CD4-positive, alpha-beta memory T cell (primary cell): ENCODE measurements at regions of chr11 and their contacts with region 1.

Region 1: DNA sequence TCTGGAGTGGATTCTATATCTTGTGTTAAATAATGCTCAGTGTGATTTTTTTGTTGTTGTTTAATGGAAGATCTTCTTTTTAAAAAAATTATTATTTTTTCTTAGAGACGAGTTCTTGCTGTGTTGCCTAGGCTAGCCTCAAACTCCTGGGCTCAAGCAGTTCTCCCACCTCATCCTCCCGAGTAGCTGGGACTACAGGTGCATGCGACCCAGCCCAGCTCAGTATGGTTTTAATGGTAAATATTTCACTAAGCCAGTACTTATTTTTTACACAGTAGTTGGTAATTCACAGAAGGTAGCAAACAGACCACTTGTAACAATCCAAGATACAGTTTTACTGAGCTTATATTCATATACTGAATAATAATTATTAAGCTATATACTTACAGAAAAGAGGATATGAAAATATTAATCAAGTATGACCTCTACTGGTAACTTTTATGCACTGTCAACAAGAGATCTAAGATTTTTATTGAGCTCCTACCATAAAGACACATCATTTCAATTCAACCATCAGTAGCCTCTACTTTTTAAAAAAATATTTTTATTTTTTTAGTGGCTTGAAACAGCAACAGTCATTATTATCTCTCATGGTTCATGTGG is 6.1 kb upstream of the CD59 start:
- DNase-seq: peak in 4 of 5 donors; percentile 15 to 35 (median 34)
- H3K4me3 ChIP-seq: no peak overlapping the region
- H3K4me3 Mint-ChIP-seq: no peak overlapping the region
- H3K27ac ChIP-seq: no peak overlapping the region
- H3K27ac Mint-ChIP-seq: peak overlapping the region in 1 of 7 donors; percentile 41
- H3K4me1 ChIP-seq: no peaks in the 10 kb centered on the region
- H3K4me1 Mint-ChIP-seq: peaks cover 0 to 4% (median 3%) of the 10 kb centered on the region in 4 donors
- H3K27me3 ChIP-seq: no peaks in the 10 kb centered on the region
- H3K27me3 Mint-ChIP-seq: no peaks in the 10 kb centered on the region

Region 2: DNA sequence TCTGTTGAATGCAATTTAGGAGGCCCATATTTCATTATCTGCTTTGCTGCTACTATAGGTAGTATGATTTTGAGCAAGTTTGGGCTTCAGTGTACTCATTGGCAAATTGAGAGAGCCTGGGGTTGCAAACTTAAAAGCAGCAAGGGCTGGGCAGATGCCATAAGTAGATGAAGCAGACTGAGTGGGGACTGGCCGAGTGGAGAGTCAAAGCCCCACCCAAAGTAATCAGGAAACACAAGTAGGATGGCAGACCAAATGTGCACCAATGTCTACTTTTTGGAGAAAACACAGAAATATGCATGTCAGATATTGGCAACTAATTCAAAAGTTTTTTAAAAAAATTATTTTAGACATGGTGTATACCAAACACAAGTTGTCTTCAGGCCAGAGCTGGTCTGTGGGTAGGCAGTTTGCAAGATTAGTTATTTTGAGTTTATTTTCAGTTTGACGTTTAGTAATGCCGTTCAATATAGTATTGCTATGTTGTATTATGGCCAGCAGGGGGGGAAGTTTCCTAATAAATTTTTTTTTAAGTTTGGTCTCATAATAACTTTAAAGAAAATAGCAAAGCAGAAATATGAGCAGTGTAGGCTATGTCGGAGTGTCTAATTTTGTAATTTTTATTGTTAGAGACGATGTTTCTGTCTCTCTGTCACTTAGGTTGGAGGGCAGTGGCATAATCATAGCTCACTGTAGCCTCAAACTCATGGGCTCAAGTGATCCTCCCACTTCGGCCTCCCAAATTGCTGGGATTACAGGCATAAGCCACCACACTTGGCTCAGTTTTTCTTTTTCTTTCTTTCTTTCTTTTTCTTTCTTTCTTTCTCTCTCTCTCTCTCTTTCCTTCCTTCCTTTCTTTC is 380.1 kb before region 1 on chr11:
- CTCF ChIA-PET with region 1: interaction called, 34 read pairs
- POLR2A ChIA-PET with region 1: interaction called, 4 read pairs
- intact Hi-C with region 1: no loop called
- DNase-seq: peak in 4 of 5 donors; percentile 32 to 40 (median 36)
- H3K4me3 ChIP-seq: no peak overlapping the region
- H3K4me3 Mint-ChIP-seq: peak overlapping the region in 2 of 8 donors; percentile 26 to 50
- H3K27ac ChIP-seq: no peak overlapping the region
- H3K27ac Mint-ChIP-seq: no peak overlapping the region
- H3K4me1 ChIP-seq: peaks cover 6% of the 10 kb centered on the region
- H3K4me1 Mint-ChIP-seq: peaks cover 0 to 2% (median under 1%) of the 10 kb centered on the region in 4 donors
- H3K27me3 ChIP-seq: no peaks in the 10 kb centered on the region
- H3K27me3 Mint-ChIP-seq: peaks cover 2 to 3% of the 10 kb centered on the region in 2 donors

Region 3: DNA sequence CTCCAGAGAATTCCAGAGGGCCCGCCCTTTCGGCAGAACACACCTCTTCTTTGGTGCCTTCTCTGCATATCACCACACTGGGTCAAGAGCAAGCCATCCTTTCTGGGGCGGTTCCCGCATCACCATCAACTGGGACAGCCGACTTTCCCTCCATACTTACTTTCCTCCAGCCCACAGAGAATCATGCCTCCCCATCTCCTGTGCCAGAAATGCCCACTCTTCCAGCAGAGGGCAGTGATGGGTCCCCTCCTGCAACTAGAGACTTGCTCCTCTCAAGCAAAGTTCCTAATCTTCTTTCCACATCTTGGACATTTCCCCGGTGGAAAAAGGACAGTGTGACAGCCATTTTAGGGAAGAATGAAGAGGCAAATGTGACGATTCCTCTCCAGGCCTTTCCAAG is 199.4 kb before region 1 on chr11:
- CTCF ChIA-PET with region 1: interaction called, 40 read pairs
- POLR2A ChIA-PET with region 1: no interaction called
- intact Hi-C with region 1: no loop called
- DNase-seq: peak in 4 of 5 donors; percentile 16 to 22 (median 20)
- H3K4me3 ChIP-seq: no peak overlapping the region
- H3K4me3 Mint-ChIP-seq: no peak overlapping the region
- H3K27ac ChIP-seq: no peak overlapping the region
- H3K27ac Mint-ChIP-seq: no peak overlapping the region
- H3K4me1 ChIP-seq: no peaks in the 10 kb centered on the region
- H3K4me1 Mint-ChIP-seq: no peaks in the 10 kb centered on the region
- H3K27me3 ChIP-seq: peaks cover 4% of the 10 kb centered on the region
- H3K27me3 Mint-ChIP-seq: peaks cover 28 to 37% of the 10 kb centered on the region in 2 donors

Region 4: DNA sequence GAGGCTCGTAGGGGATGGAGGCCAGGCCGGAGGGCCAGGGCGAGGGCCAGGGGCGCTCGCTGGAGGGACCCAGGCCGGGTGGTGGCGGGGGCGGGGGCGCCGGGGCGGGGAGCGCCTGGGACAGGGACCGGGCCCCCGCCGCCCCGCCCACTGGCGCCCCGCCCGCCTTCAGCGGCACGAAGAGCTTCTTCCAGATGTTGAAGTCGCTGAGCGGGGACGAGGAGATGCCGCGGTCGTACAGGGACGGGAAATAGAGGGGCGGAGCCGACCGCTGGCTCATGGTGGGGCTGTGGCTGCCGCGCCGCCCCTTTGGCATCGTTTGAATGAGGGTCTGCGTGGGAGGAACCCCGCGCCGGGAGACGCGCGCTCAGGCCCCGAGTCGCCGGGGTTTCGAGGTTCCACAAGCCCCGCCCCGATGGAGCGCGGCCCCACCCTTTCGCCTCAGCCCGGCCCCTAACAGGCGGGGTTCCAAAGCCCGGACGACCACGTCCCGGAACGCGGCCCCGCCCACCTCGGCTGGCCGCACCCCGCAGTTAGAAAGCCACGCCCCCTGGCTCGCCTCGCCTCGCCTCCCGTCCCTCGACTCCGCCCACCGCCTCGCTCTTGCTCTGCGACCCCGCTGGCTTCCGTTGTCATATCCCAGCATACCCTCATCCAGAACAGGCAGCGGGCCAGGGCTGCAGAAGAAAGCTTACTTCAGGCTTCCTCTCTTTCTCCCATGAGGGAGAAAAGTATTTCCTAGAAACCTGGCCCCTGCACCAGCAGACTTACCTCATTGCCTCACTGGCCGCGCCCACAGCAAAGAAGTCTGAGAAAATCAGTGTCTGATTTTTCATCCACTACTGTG is 41.7 kb before region 1 on chr11 and contains the start of gene C11orf91:
- CTCF ChIA-PET with region 1: interaction called, 12 read pairs
- POLR2A ChIA-PET with region 1: interaction called, 33 read pairs
- intact Hi-C with region 1: no loop called
- DNase-seq: peak; percentile 89 to 95 (median 94)
- H3K4me3 ChIP-seq: peak within 1 kb of the TSS; percentile 7 to 53
- H3K4me3 Mint-ChIP-seq: peak within 1 kb of the TSS; percentile 89 to 96 (median 92)
- H3K27ac ChIP-seq: peak within 1 kb of the TSS; percentile 29
- H3K27ac Mint-ChIP-seq: peak within 1 kb of the TSS; percentile 78 to 93 (median 88)
- H3K4me1 ChIP-seq: peaks cover 15% of the 10 kb centered on the region
- H3K4me1 Mint-ChIP-seq: peaks cover 11 to 22% (median 19%) of the 10 kb centered on the region in 4 donors
- H3K27me3 ChIP-seq: no peaks in the 10 kb centered on the region
- H3K27me3 Mint-ChIP-seq: peaks cover 5 to 13% of the 10 kb centered on the region in 2 donors
- total RNA-seq, gene C11orf91: 0.49 TPM in 1 of 2 experiments, not detected in the other

Region 5: GRCh38 chr11:33716236-33716635 is 26.1 kb before region 1 on chr11:
- CTCF ChIA-PET with region 1: interaction called, 74 read pairs
- POLR2A ChIA-PET with region 1: no interaction called
- intact Hi-C with region 1: loop called (anchors 1 kb)
- DNase-seq: peak in 1 of 5 donors; percentile 11
- H3K4me3 ChIP-seq: no peak overlapping the region
- H3K4me3 Mint-ChIP-seq: no peak overlapping the region
- H3K27ac ChIP-seq: no peak overlapping the region
- H3K27ac Mint-ChIP-seq: no peak overlapping the region
- H3K4me1 ChIP-seq: no peaks in the 10 kb centered on the region
- H3K4me1 Mint-ChIP-seq: peaks cover 0 to under 1% (median 0%) of the 10 kb centered on the region in 4 donors
- H3K27me3 ChIP-seq: no peaks in the 10 kb centered on the region
- H3K27me3 Mint-ChIP-seq: no peaks in the 10 kb centered on the region

Region 6: GRCh38 chr11:33753304-33753967 is 11.1 kb after region 1 on chr11:
- CTCF ChIA-PET with region 1: interaction called, 17 read pairs
- POLR2A ChIA-PET with region 1: interaction called, 3 read pairs
- intact Hi-C with region 1: no loop called
- DNase-seq: no peak
- H3K4me3 ChIP-seq: no peak overlapping the region
- H3K4me3 Mint-ChIP-seq: no peak overlapping the region
- H3K27ac ChIP-seq: no peak overlapping the region
- H3K27ac Mint-ChIP-seq: peak overlapping the region in 2 of 7 donors; percentile 2 to 21
- H3K4me1 ChIP-seq: no peaks in the 10 kb centered on the region
- H3K4me1 Mint-ChIP-seq: no peaks in the 10 kb centered on the region
- H3K27me3 ChIP-seq: no peaks in the 10 kb centered on the region
- H3K27me3 Mint-ChIP-seq: no peaks in the 10 kb centered on the region